PC-9 (cell line): ENCODE measurements at regions of chr20 and their contacts with region 1.

Region 1: DNA sequence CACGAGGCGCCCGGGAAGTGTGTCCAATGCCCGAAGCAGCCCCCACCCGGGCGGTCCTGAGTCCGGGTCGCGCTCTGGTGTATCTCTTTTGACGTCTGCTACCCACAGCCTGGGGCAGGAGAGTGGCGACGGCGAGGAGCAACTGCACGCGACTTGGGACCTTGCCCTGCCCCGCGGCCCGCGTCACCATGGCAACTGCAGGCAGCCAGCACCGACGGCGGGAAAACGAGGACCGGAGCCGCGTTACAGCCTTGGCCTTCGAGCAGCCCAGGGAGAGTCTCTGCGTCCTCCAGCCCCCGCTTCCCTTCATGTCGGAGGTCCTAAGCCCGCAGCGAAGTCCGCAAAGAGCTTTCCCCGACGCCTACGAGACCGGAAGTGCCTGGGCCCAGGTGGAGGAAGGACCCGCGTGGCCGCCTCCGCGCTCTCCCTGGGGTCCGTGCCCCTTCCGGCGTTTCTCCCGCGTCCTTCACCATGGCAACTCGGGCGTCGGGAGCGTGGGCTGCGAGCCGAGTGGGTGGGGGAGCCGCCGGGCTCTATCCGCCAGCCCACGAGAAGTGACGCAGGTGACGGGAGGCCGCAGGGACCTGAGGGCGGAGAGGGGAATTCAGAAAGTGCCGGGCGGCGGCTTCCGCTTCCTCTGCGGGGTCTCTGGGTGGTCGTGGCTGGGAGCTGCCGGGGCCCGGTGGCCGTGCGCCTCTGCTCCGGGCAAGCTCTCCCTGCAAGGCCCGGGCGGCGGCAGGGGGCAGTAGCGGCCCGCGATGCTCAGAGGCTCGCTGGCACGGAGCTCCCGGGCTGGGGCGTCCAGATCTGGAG is 88.6 kb upstream of the TGM3 start:
- DNase-seq: peak in 1 of 2 experiments; percentile 60
- H3K4me3 ChIP-seq: no peak overlapping the region
- H3K27ac ChIP-seq: no peak overlapping the region
- H3K4me1 ChIP-seq: no peaks in the 10 kb centered on the region
- H3K27me3 ChIP-seq: peaks cover 26% of the 10 kb centered on the region
- CTCF ChIP-seq: 0 out of 2 replicates have a peak, but pooled peaks have one; percentile 28

Region 2: DNA sequence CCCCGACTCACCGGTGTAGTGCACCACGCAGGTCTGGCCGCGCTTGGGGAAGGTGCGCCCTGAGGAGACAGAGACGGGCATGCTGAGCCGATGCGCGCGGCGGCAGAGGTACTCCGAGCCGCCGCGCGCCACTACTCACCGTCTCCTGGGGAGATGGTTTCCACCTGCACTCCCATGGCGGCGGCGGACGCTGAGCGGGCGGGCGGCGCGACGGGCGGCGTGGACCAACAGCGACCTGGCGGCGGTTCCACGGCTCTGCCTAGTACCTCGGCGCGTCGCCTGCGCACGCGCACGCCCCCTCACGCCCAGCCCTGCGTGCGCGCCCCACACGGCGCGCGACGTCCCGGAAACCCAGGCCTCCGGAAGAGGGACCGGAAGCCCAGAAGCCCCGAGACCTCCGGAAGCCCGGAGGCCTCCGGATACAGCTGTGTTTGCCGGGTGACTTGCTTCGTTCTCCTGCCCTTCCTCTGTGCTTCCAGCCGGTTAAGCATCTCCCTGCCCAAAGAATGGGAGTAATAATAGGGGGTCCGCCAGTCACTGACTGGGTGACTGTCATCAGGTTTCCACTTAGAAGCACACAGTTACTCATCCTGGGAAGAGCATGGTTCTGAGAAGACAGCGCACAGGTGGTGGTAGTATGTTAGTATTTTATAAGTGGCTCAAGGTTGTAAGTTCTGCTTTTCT is 814.2 kb before region 1 on chr20 and contains the start of gene FKBP1A:
- CTCF ChIA-PET with region 1: no interaction called
- POLR2A ChIA-PET with region 1: no interaction called
- intact Hi-C with region 1: no loop called
- DNase-seq: peak; percentile 83 to 89
- H3K4me3 ChIP-seq: peak within 1 kb of the TSS; percentile 97
- H3K27ac ChIP-seq: peak within 1 kb of the TSS; percentile 40; the same call in 1 of the 2 replicates
- H3K4me1 ChIP-seq: peaks cover 57% of the 10 kb centered on the region
- H3K27me3 ChIP-seq: no peaks in the 10 kb centered on the region
- CTCF ChIP-seq: no peak; the same call in 1 of the 2 replicates
- total RNA-seq, gene FKBP1A: 248 and 320 TPM in 2 replicates

Region 3: DNA sequence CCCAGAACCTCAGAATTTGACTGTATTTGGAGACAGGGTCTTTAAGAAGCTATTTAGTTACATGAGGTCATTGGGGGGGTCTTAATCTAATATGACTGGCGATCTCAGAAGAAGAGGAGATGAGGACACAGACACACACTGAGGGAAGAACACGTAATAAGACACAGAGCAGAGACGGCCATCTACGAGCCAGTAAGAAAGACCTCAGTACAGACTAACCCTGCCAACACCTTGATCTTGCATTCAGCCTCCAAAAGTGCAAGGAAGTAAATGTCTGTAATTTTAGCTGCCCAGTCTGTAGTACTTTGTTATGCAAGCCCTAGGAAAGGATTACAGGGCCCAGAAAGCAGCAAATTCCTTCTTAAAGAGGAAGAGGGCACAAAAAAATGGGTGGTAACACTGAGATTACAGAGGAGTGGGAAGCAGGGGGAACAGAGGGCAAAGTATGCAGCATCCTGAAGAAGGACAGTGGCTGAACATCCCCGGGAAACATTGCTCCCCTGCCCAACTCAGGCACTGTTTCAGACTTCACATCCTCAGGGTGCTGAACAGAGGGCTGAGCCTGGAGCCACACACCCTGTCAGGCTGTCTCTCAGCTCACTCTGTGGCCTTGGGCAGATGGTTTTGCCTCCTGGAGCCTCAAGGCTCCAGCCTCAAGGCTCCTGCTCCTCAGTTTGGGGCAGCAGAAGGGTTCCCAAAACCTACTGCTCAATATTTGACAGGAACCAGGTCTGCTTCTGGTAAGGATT is 521.7 kb before region 1 on chr20:
- CTCF ChIA-PET with region 1: no interaction called
- POLR2A ChIA-PET with region 1: no interaction called
- intact Hi-C with region 1: no loop called
- DNase-seq: no peak
- H3K4me3 ChIP-seq: no peak overlapping the region
- H3K27ac ChIP-seq: no peak overlapping the region
- H3K4me1 ChIP-seq: peaks cover 15% of the 10 kb centered on the region
- H3K27me3 ChIP-seq: no peaks in the 10 kb centered on the region
- CTCF ChIP-seq: no peak

Region 4: DNA sequence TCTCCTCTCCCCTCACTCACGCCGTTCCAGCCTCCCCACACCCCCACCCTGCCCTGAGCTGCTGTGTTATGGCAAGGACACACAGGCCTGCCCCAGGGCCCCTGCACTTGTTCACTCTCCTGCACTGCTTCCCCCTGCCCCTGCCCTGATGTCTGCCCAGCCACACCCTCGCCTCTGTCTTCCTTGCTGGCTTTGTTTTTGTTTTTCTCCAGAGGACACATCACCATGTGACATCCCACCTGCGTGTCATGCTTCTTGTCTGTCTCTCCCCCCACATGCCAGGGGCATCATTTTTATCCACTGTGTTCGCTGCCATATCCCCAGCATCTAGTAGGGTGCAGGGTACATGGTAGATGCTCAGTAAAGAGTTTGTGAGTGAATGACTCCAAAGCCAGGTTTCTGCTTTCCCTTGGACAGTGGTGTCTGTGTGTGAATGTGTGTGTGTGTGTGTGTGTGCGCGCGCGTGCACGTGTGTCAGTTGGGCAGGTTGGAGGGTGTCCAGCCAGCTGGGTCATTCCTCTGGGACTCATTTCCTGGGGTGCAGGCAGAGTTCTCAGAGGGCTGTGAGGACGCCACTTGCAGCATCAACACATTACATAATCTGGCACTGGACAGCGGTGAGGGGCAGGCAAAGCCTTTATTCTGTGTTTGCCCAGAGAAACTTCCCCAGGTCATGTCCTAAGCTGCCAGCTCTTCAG is 44.9 kb before region 1 on chr20:
- CTCF ChIA-PET with region 1: no interaction called
- POLR2A ChIA-PET with region 1: no interaction called
- intact Hi-C with region 1: no loop called
- DNase-seq: no peak
- H3K4me3 ChIP-seq: no peak overlapping the region
- H3K27ac ChIP-seq: no peak overlapping the region
- H3K4me1 ChIP-seq: no peaks in the 10 kb centered on the region
- H3K27me3 ChIP-seq: no peaks in the 10 kb centered on the region
- CTCF ChIP-seq: no peak

Region 5: GRCh38 chr20:2451939-2452732 is 245.0 kb after region 1 on chr20:
- CTCF ChIA-PET with region 1: interaction called, 3 read pairs
- POLR2A ChIA-PET with region 1: interaction called, 3 read pairs
- intact Hi-C with region 1: loop called (anchors 1 kb)
- DNase-seq: peak; percentile 47 to 67
- H3K4me3 ChIP-seq: no peak overlapping the region
- H3K27ac ChIP-seq: no peak overlapping the region
- H3K4me1 ChIP-seq: no peaks in the 10 kb centered on the region
- H3K27me3 ChIP-seq: peaks cover 8% of the 10 kb centered on the region; the same call in 1 of the 2 replicates
- CTCF ChIP-seq: peak; percentile 89